ENCODE measurements at regions of chr3 and their contacts with region 1.

Region 1: DNA sequence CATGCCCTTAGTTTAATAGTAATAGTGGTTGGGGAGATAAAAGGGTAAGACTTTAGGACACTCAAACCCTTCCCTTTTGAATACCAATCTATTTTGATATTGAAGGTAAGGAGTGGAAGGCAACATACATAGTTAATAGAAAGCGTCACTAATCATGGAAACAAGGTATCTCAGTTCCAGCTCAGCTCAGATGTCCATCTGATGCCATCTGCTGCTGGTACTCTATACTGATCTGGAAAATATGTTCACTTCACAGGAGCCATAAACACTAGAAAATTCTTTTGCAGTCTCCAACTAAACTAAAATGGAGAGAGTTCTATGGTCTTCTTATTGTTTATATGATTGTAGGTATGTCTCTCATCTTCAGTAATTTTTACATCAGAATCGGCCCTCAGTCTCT is 1777.1 kb downstream of the OTOL1 start:
- DNase-seq: no peak
- H3K4me3 ChIP-seq: no peak overlapping the region
- H3K4me3 Mint-ChIP-seq: no peak overlapping the region
- H3K27ac Mint-ChIP-seq: no peak overlapping the region
- H3K4me1 ChIP-seq: no peaks in the 10 kb centered on the region
- H3K4me1 Mint-ChIP-seq: no peaks in the 10 kb centered on the region
- H3K27me3 ChIP-seq: no peaks in the 10 kb centered on the region
- H3K27me3 Mint-ChIP-seq: peaks cover 6% of the 10 kb centered on the region
- CTCF ChIP-seq: no peak

Region 2: GRCh38 chr3:163056874-163057497 is 216.7 kb before region 1 on chr3:
- CTCF ChIA-PET with region 1: no interaction called
- POLR2A ChIA-PET with region 1: no interaction called
- intact Hi-C with region 1: loop called (anchors 1 kb)
- DNase-seq: peak in 1 of 2 experiments; percentile 67
- H3K4me3 ChIP-seq: no peak overlapping the region
- H3K4me3 Mint-ChIP-seq: no peak overlapping the region
- H3K27ac Mint-ChIP-seq: no peak overlapping the region
- H3K4me1 ChIP-seq: no peaks in the 10 kb centered on the region
- H3K4me1 Mint-ChIP-seq: no peaks in the 10 kb centered on the region
- H3K27me3 ChIP-seq: no peaks in the 10 kb centered on the region
- H3K27me3 Mint-ChIP-seq: no peaks in the 10 kb centered on the region
- CTCF ChIP-seq: peak; percentile 56 to 61

Region 3: GRCh38 chr3:163167352-163167751 is 106.3 kb before region 1 on chr3:
- CTCF ChIA-PET with region 1: no interaction called
- POLR2A ChIA-PET with region 1: no interaction called
- intact Hi-C with region 1: no loop called
- DNase-seq: no peak
- H3K4me3 ChIP-seq: no peak overlapping the region
- H3K4me3 Mint-ChIP-seq: no peak overlapping the region
- H3K27ac Mint-ChIP-seq: no peak overlapping the region
- H3K4me1 ChIP-seq: no peaks in the 10 kb centered on the region
- H3K4me1 Mint-ChIP-seq: no peaks in the 10 kb centered on the region
- H3K27me3 ChIP-seq: no peaks in the 10 kb centered on the region
- H3K27me3 Mint-ChIP-seq: no peaks in the 10 kb centered on the region
- CTCF ChIP-seq: no peak

Region 4: DNA sequence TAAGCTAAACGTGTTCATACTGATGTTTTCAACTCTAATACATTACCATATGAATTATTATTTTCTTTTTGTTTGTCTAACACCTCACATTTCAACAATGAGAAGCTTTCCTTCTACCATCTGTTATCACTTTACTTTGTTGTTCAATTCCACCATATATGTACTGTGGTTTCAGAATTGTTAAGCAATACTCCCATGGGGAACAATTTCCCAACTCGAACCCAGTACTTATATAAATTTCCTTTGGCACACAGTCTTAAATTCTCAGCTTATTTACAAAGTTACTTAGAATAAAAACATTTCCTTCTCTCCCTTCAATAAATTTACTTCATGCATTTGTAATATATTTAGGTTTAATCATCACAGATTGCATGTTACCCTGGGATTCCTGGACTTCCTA is 12.6 kb before region 1 on chr3:
- CTCF ChIA-PET with region 1: no interaction called
- POLR2A ChIA-PET with region 1: no interaction called
- intact Hi-C with region 1: no loop called
- DNase-seq: no peak
- H3K4me3 ChIP-seq: no peak overlapping the region
- H3K4me3 Mint-ChIP-seq: no peak overlapping the region
- H3K27ac Mint-ChIP-seq: no peak overlapping the region
- H3K4me1 ChIP-seq: no peaks in the 10 kb centered on the region
- H3K4me1 Mint-ChIP-seq: no peaks in the 10 kb centered on the region
- H3K27me3 ChIP-seq: no peaks in the 10 kb centered on the region
- H3K27me3 Mint-ChIP-seq: no peaks in the 10 kb centered on the region
- CTCF ChIP-seq: no peak

Measured in Caco-2 (cell line).